ENCODE measurements at regions of chr6 and their contacts with region 1.

Region 1: GRCh38 chr6:41072676-41073623 is at the start of gene NFYA:
- DNase-seq: peak; percentile 99 to 100 (median 100)
- ATAC-seq: peak; percentile 80
- H3K4me3 ChIP-seq: peak within 1 kb of the TSS; percentile 78
- H3K4me3 Mint-ChIP-seq: peak within 1 kb of the TSS; percentile 90 to 98 (median 96)
- H3K27ac ChIP-seq: peak within 1 kb of the TSS; percentile 95
- H3K27ac Mint-ChIP-seq: peak within 1 kb of the TSS; percentile 95 to 99 (median 97)
- H3K4me1 ChIP-seq: peaks cover 30% of the 10 kb centered on the region in 2 donors
- H3K4me1 Mint-ChIP-seq: peaks cover 39 to 66% (median 59%) of the 10 kb centered on the region in 7 donors
- H3K27me3 ChIP-seq: no peaks in the 10 kb centered on the region
- H3K27me3 Mint-ChIP-seq: peaks cover 0 to 5% (median 0%) of the 10 kb centered on the region in 5 donors
- total RNA-seq, gene NFYA: 31.6 to 63.3 (median 35.9) TPM

Region 2: DNA sequence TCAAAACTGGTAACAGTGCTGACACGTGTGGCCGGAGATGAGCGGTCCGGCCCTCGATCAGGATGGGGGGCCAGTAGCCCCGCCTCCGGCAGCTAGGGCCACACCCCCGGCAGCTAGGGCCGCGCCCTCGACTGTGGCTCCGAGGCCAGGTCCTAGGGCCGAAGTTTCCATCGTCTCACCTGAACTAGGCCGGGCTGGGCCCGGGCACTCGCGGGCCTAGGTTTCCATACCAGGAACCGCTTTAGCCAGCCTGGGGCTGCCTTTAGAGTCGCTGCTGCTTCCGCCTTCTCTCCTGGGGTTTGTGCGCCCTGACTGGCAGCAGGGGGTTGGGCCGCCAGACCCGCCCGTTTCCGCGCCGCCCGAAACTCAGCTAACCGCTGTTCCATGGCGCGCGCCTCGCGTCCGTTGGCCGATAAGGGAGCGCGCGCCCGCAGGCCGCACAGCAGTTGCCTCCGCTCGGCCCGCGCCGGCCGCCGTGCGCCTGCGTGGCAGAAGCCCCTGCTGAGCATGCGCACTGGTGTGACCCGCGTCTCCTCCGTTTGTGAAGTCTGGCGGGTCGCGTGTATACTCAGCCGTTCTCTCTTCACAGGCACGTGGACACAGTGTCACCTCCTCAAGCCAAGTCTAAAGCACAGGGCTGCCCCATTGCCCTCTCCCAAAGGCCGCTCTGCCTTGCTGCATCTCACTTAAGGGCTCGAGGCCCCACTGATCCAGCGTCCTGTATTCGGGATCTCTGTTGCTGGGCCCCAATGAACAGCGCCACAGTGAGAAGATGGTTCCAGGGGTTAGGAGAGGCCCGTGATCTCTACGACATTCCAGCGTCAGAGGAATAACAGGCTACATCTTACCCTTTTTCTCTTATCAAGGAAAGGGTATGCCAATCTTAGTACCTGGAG is 1958.0 kb before region 1 on chr6 and contains the start of gene SAYSD1:
- CTCF ChIA-PET with region 1: no interaction called
- POLR2A ChIA-PET with region 1: no interaction called
- intact Hi-C with region 1: loop called (anchors 1 to 2 kb)
- DNase-seq: peak; percentile 85 to 94 (median 92)
- ATAC-seq: peak; percentile 93
- H3K4me3 ChIP-seq: peak within 1 kb of the TSS; percentile 74
- H3K4me3 Mint-ChIP-seq: peak within 1 kb of the TSS; percentile 82 to 100 (median 96)
- H3K27ac ChIP-seq: peak within 1 kb of the TSS; percentile 86
- H3K27ac Mint-ChIP-seq: peak within 1 kb of the TSS; percentile 92 to 99 (median 97)
- H3K4me1 ChIP-seq: peaks cover 21 to 43% of the 10 kb centered on the region in 2 donors
- H3K4me1 Mint-ChIP-seq: peaks cover 25 to 67% (median 62%) of the 10 kb centered on the region in 7 donors
- H3K27me3 ChIP-seq: no peaks in the 10 kb centered on the region
- H3K27me3 Mint-ChIP-seq: no peaks in the 10 kb centered on the region
- total RNA-seq, gene SAYSD1: 15.1 to 26.8 (median 19.8) TPM

Region 3: GRCh38 chr6:41027799-41028628 is 44.9 kb before region 1 on chr6:
- CTCF ChIA-PET with region 1: interaction called, 7 read pairs
- POLR2A ChIA-PET with region 1: interaction called, 6 read pairs
- intact Hi-C with region 1: loop called (anchors 1 kb)
- DNase-seq: peak; percentile 38 to 92 (median 73)
- ATAC-seq: peak; percentile 94
- H3K4me3 ChIP-seq: peak overlapping the region; percentile 70
- H3K4me3 Mint-ChIP-seq: peak overlapping the region; percentile 86 to 91 (median 88)
- H3K27ac ChIP-seq: peak overlapping the region; percentile 53
- H3K27ac Mint-ChIP-seq: peak overlapping the region; percentile 69 to 92 (median 87)
- H3K4me1 ChIP-seq: peaks cover 6 to 16% of the 10 kb centered on the region in 2 donors
- H3K4me1 Mint-ChIP-seq: peaks cover 17 to 25% (median 22%) of the 10 kb centered on the region in 7 donors
- H3K27me3 ChIP-seq: no peaks in the 10 kb centered on the region
- H3K27me3 Mint-ChIP-seq: no peaks in the 10 kb centered on the region

Region 4: GRCh38 chr6:41298785-41299502 is 226.0 kb after region 1 on chr6:
- CTCF ChIA-PET with region 1: no interaction called
- POLR2A ChIA-PET with region 1: interaction called, 5 read pairs
- intact Hi-C with region 1: loop called in 1 of 2 experiments (anchors 1 kb)
- DNase-seq: peak in 7 of 9 donors; percentile 60 to 85 (median 81)
- ATAC-seq: peak; percentile 94
- H3K4me3 ChIP-seq: peak overlapping the region; percentile 4
- H3K4me3 Mint-ChIP-seq: peak overlapping the region; percentile 56 to 91 (median 76)
- H3K27ac ChIP-seq: peak overlapping the region; percentile 22
- H3K27ac Mint-ChIP-seq: peak overlapping the region; percentile 80 to 98 (median 88)
- H3K4me1 ChIP-seq: peaks cover 18 to 21% of the 10 kb centered on the region in 2 donors
- H3K4me1 Mint-ChIP-seq: peaks cover 24 to 73% (median 57%) of the 10 kb centered on the region in 7 donors
- H3K27me3 ChIP-seq: no peaks in the 10 kb centered on the region
- H3K27me3 Mint-ChIP-seq: peaks cover 0 to 19% (median 0%) of the 10 kb centered on the region in 5 donors

Region 5: GRCh38 chr6:41735427-41736356 is 662.7 kb after region 1 on chr6 and contains the start of gene TFEB:
- CTCF ChIA-PET with region 1: no interaction called
- POLR2A ChIA-PET with region 1: no interaction called
- intact Hi-C with region 1: loop called (anchors 1 to 2 kb)
- DNase-seq: peak; percentile 88 to 98 (median 93)
- ATAC-seq: peak; percentile 87
- H3K4me3 ChIP-seq: peak within 1 kb of the TSS; percentile 57
- H3K4me3 Mint-ChIP-seq: peak within 1 kb of the TSS; percentile 66 to 89 (median 80)
- H3K27ac ChIP-seq: peak within 1 kb of the TSS; percentile 80
- H3K27ac Mint-ChIP-seq: peak within 1 kb of the TSS in 8 of 9 donors; percentile 34 to 84 (median 62)
- H3K4me1 ChIP-seq: peaks cover 32 to 37% of the 10 kb centered on the region in 2 donors
- H3K4me1 Mint-ChIP-seq: peaks cover 13 to 32% (median 24%) of the 10 kb centered on the region in 7 donors
- H3K27me3 ChIP-seq: no peaks in the 10 kb centered on the region
- H3K27me3 Mint-ChIP-seq: no peaks in the 10 kb centered on the region
- total RNA-seq, gene TFEB: 7.4 to 39.9 (median 11.8) TPM

Region 6: DNA sequence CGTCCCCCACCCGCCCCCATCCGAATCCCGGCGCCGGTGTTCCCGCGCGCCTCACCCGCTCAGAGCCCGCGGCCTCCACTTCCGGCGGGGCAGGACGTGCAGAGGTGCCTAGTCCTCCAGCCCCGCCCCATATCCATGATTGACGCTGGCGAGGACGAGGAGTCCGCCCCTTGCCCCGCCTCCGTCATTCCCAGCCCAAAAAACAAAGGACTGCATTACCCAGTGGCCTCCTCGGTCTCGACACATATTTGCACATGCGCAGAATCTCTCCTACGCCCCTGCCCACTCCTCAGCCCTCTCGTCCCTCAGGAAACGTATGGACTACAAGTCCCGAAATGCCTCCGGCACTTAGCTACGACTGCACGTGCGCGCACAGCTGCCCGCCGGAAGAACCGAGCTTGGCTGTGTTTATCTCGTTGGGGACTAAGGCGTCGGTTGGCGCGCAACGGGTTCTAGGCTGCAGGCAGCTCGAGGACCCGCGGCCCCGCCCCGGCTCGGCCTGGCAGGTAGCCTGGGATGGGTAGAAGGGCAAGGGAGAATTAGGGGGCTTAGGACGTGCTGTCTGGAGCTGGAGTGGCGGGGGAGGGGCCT is 1941.0 kb after region 1 on chr6 and contains the starts of genes KLHDC3 and MEA1:
- CTCF ChIA-PET with region 1: no interaction called
- POLR2A ChIA-PET with region 1: no interaction called
- intact Hi-C with region 1: loop called in 1 of 2 experiments (anchors 5 kb)
- DNase-seq: peak; percentile 83 to 100 (median 99)
- ATAC-seq: peak; percentile 98
- H3K4me3 ChIP-seq: peak within 1 kb of the TSS; percentile 73
- H3K4me3 Mint-ChIP-seq: peak within 1 kb of the TSS; percentile 85 to 99 (median 92)
- H3K27ac ChIP-seq: peak within 1 kb of the TSS; percentile 84
- H3K27ac Mint-ChIP-seq: peak within 1 kb of the TSS; percentile 82 to 97 (median 92)
- H3K4me1 ChIP-seq: peaks cover 20 to 31% of the 10 kb centered on the region in 2 donors
- H3K4me1 Mint-ChIP-seq: peaks cover 45 to 78% (median 58%) of the 10 kb centered on the region in 7 donors
- H3K27me3 ChIP-seq: no peaks in the 10 kb centered on the region
- H3K27me3 Mint-ChIP-seq: peaks cover 0 to 3% (median 0%) of the 10 kb centered on the region in 5 donors
- total RNA-seq, gene KLHDC3: 39.9 to 76.9 (median 67.4) TPM
- total RNA-seq, gene MEA1: 20.3 to 58.0 (median 32.7) TPM